ENCODE measurements at regions of chr12 and their contacts with region 1.

Region 1: DNA sequence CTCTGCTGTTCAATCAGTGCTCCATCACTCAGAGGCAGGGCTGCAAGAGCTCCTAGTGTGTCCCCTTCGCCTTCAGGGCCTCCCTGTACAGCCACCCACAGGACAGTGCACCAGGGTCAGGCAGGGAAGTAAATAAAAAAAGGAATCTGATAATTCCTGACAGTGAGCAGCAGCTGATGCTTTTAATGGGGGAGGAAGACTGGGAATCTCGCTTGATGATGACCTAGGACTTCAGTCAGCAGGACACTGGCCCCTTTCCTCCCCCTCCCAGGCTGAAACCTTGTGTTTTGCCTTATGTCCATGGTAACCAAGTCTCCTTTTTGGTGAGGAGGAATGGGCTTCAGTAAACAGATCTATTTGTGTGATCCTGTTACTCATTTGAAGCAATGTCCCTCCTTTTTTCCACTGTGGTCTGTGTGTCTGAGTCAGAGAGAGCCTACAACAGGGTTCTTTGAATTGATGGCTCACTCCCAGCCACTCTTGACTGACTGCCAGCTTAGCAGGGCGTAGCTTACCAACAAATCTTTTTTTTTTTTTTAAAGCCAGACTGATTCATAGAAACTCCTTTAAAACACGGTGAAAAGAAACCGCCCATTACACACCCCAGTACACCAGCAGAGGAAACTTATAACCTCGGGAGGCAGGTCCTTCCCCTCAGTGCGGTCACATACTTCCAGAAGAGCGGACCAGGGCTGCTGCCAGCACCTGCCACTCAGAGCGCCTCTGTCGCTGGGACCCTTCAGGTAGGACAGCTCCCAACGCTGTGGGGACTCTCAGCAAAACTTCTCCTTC is at the start of gene EMP1:
- DNase-seq: peak; percentile 98
- ATAC-seq: peak; percentile 72
- H3K4me3 ChIP-seq: peak within 1 kb of the TSS; percentile 100
- H3K27ac ChIP-seq: peak within 1 kb of the TSS; percentile 99
- H3K4me1 ChIP-seq: peaks cover 53% of the 10 kb centered on the region
- H3K27me3 ChIP-seq: no peaks in the 10 kb centered on the region
- CTCF ChIP-seq: no peak
- total RNA-seq, gene EMP1: 158 and 187 TPM in 2 replicates

Region 2: GRCh38 chr12:13049816-13050215 is 146.5 kb before region 1 on chr12:
- CTCF ChIA-PET with region 1: no interaction called
- POLR2A ChIA-PET with region 1: interaction called, 14 read pairs
- intact Hi-C with region 1: no loop called
- DNase-seq: no peak
- ATAC-seq: no peak
- H3K4me3 ChIP-seq: no peak overlapping the region
- H3K27ac ChIP-seq: no peak overlapping the region
- H3K4me1 ChIP-seq: 0 out of 2 replicates have a peak, but pooled peaks cover 4% of the 10 kb centered on the region
- H3K27me3 ChIP-seq: no peaks in the 10 kb centered on the region
- CTCF ChIP-seq: no peak

Region 3: DNA sequence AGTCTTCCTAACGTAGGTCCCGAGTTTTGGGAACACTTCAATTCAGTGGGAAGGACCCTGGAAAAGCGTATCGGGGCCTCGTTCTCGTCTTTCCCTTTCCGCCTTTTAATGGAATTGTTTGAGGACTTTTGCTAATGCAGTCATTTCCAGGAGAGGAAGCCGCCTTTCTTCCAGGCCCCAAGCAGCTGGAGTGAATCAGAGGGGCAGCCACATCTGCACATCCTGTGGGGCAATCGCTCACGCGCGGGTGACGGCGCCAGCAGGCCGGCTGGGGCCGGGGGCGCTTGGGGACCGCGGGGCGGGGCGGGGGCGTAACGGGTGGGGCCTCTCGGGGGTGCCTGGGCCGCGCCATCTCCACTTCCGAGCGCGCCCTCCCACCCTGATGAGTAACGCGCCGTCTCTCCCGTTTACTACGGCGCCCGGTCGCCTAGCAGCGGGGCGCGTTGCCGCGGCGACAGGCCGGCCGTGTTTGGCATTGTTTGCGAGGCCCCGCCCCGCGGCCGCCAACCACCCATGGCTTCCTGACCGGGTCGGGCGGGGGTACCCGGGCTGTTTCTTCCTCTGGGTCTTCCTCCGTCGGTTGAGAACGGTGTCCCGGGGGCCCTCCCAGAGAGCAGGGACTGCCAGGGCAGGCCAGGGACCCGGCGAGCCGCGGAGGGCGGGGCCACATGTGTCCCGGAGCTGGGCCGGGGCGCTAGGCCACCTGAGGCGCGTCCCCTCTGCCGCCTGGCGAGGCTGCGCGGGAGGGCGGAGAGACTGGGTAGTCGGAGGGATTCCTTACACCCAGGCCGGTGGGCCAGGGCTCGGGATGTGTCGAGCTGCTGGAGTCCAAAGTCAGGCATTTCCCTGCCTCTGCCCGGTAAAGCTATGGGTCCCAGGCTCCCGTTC is 95.2 kb before region 1 on chr12:
- CTCF ChIA-PET with region 1: interaction called, 4 read pairs
- POLR2A ChIA-PET with region 1: interaction called, 17 read pairs
- intact Hi-C with region 1: loop called (anchors 1 kb)
- DNase-seq: peak; percentile 92
- ATAC-seq: peak; percentile 55
- H3K4me3 ChIP-seq: peak overlapping the region; percentile 71
- H3K27ac ChIP-seq: peak overlapping the region; percentile 99
- H3K4me1 ChIP-seq: peaks cover 59% of the 10 kb centered on the region
- H3K27me3 ChIP-seq: no peaks in the 10 kb centered on the region
- CTCF ChIP-seq: no peak

Region 4: GRCh38 chr12:13135371-13136178 is 60.8 kb before region 1 on chr12:
- CTCF ChIA-PET with region 1: no interaction called
- POLR2A ChIA-PET with region 1: interaction called, 9 read pairs
- intact Hi-C with region 1: loop called (anchors 5 kb)
- DNase-seq: peak; percentile 97
- ATAC-seq: peak; percentile 94
- H3K4me3 ChIP-seq: peak overlapping the region; percentile 62
- H3K27ac ChIP-seq: peak overlapping the region; percentile 89
- H3K4me1 ChIP-seq: peaks cover 40% of the 10 kb centered on the region
- H3K27me3 ChIP-seq: no peaks in the 10 kb centered on the region
- CTCF ChIP-seq: peak; percentile 31; the same call in 1 of the 2 replicates

Region 5: DNA sequence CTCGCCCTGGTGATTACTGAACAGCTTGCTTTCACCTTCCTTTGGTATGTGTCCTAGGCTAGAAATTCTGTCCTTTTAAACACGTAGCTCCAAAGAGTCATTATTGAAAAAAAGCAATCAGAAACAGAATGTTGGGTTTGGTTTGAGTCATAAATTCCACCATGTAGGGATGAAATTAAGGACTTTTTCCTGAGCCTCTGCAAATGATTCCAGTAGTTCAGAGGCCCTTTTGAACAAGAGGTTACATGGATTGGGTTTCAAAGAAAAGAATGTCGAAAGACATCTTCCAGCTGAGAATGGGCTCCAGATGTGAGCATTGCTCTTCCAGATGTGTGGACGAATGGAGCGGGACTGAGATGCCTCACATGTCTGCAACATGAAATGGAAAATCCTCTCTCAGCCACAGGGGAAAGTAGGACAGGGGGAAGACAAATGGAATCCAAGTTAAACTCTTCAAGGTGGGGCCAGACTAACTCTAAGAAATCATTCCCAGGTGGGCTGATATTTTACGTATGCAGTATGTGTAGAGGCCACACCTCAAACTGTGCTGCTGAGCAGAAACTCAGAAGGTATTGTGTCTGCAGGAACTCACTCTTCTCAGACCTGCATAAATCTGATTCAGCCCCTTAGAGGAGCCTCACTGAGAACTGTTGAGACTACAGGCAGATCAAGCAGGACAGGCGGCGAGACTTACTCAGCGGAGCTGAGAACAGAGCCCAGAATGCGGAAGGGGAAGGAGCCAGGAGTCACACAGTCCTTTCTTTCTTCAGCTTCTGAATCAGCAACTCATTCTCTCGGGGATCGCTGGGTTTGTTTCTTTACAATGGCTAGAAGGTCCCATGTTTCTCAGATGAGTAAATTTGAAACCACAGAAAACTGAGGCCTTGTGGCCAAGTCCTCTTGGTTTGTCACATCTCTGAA is 23.1 kb before region 1 on chr12:
- CTCF ChIA-PET with region 1: no interaction called
- POLR2A ChIA-PET with region 1: interaction called, 12 read pairs
- intact Hi-C with region 1: no loop called
- DNase-seq: peak; percentile 75
- ATAC-seq: peak; percentile 82
- H3K4me3 ChIP-seq: no peak overlapping the region
- H3K27ac ChIP-seq: peak overlapping the region; percentile 93
- H3K4me1 ChIP-seq: peaks cover 56% of the 10 kb centered on the region
- H3K27me3 ChIP-seq: no peaks in the 10 kb centered on the region
- CTCF ChIP-seq: no peak

Region 6: GRCh38 chr12:13223179-13223859 is 27.0 kb after region 1 on chr12:
- CTCF ChIA-PET with region 1: no interaction called
- POLR2A ChIA-PET with region 1: interaction called, 19 read pairs
- intact Hi-C with region 1: no loop called
- DNase-seq: peak; percentile 94
- ATAC-seq: peak; percentile 84
- H3K4me3 ChIP-seq: no peak overlapping the region
- H3K27ac ChIP-seq: peak overlapping the region; percentile 84
- H3K4me1 ChIP-seq: peaks cover 31% of the 10 kb centered on the region
- H3K27me3 ChIP-seq: no peaks in the 10 kb centered on the region
- CTCF ChIP-seq: no peak

Measured in PC-3 (cell line).